ENCODE measurements at regions of chr16 and their contacts with region 1.

Region 1: GRCh38 chr16:19502395-19503131 is 19.3 kb downstream of the GDE1 start:
- DNase-seq: no peak
- ATAC-seq: peak; percentile 84
- H3K4me3 ChIP-seq: no peak overlapping the region
- H3K27ac ChIP-seq: no peak overlapping the region
- H3K4me1 ChIP-seq: no peaks in the 10 kb centered on the region
- H3K27me3 ChIP-seq: no peaks in the 10 kb centered on the region
- CTCF ChIP-seq: peak; percentile 65 to 68 (median 67)
- EP300 ChIP-seq: no peak
- POLR2A ChIP-seq: no peak
- RAD21 ChIP-seq: peak; percentile 73

Region 2: DNA sequence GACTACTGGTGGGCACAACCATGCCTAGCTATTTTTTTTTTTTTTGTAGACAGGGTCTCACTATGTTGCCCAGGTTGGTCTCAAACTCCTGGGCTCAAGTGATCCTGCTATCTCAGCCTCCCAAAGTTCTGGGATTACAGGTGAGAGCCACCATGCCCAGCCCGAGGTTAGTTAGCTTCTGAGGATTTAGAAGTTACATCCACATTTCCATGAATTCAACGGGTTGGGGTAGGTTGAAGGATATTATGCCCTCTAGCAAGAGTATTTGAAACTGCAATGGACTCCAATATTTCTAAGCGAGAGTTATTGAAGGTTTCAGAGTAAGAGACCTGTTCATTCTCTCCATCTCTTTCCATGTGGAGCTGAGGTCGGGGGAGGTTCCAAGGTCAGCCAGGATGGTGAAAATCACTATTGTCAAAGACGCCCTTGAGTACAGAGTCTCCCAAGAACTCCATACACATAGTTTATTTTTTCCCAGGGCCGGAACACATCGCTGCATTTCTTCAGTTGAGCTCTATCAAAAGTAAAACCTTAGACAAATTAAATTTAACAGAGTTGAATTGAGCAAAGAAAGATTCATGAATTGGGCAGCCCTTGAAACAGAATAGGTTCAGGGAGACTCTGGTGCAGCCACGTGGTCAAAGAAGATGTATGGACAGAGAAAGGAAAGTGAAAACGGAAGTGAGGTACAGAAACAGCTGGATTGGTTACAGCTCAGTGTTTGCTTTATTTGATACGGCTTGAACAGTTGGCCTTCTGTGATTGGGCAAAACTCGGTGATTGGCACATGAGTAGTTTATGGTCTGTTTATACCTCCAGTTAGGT is 407.8 kb before region 1 on chr16:
- CTCF ChIA-PET with region 1: no interaction called
- POLR2A ChIA-PET with region 1: no interaction called
- RAD21 ChIA-PET with region 1: no interaction called
- SMC1A ChIA-PET with region 1: interaction called, 3 read pairs
- in situ Hi-C with region 1: loop called (anchors 5 kb)
- intact Hi-C with region 1: no loop called
- DNase-seq: no peak
- ATAC-seq: peak; percentile 88
- H3K4me3 ChIP-seq: no peak overlapping the region
- H3K27ac ChIP-seq: no peak overlapping the region
- H3K4me1 ChIP-seq: peaks cover 6% of the 10 kb centered on the region; the same call in 1 of the 2 replicates
- H3K27me3 ChIP-seq: no peaks in the 10 kb centered on the region
- CTCF ChIP-seq: no peak
- EP300 ChIP-seq: no peak
- POLR2A ChIP-seq: no peak
- RAD21 ChIP-seq: no peak

Region 3: DNA sequence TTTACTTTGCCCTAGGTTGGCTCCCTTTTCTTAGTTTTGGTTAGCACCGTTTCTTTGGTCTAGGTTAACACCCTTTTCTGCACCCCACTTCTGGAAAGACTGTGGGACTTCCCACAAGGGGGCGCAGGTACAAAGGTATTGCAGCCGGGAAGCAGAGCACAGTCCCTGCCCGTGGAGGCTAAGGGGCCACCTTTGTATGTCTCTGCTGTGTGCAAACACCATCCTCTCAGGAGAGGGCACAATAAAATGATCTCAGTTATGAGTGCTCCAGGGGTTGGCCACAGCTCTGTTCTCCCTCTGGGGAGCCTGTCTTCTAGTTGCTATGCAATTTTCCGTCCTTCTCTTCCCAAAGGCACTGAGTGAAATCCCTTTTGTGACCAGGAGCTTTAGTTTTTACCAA is 113.3 kb before region 1 on chr16:
- CTCF ChIA-PET with region 1: interaction called, 63 read pairs
- POLR2A ChIA-PET with region 1: no interaction called
- RAD21 ChIA-PET with region 1: interaction called, 7 read pairs
- SMC1A ChIA-PET with region 1: interaction called, 22 read pairs
- in situ Hi-C with region 1: no loop called
- intact Hi-C with region 1: loop called (anchors 1 kb)
- DNase-seq: peak; percentile 8
- ATAC-seq: peak; percentile 81
- H3K4me3 ChIP-seq: no peak overlapping the region
- H3K27ac ChIP-seq: no peak overlapping the region
- H3K4me1 ChIP-seq: no peaks in the 10 kb centered on the region
- H3K27me3 ChIP-seq: no peaks in the 10 kb centered on the region; a peak in 1 of 4 replicates
- CTCF ChIP-seq: peak; percentile 47 to 60 (median 50); a peak in 5 of 6 replicates
- EP300 ChIP-seq: no peak
- POLR2A ChIP-seq: no peak
- RAD21 ChIP-seq: peak; percentile 69

Region 4: GRCh38 chr16:19432429-19432828 is 70.1 kb before region 1 on chr16:
- CTCF ChIA-PET with region 1: no interaction called
- POLR2A ChIA-PET with region 1: no interaction called
- RAD21 ChIA-PET with region 1: no interaction called
- SMC1A ChIA-PET with region 1: no interaction called
- in situ Hi-C with region 1: no loop called
- intact Hi-C with region 1: no loop called
- DNase-seq: no peak
- ATAC-seq: no peak
- H3K4me3 ChIP-seq: no peak overlapping the region
- H3K27ac ChIP-seq: no peak overlapping the region
- H3K4me1 ChIP-seq: peaks cover 6% of the 10 kb centered on the region; the same call in 1 of the 2 replicates
- H3K27me3 ChIP-seq: no peaks in the 10 kb centered on the region
- CTCF ChIP-seq: no peak
- EP300 ChIP-seq: no peak
- POLR2A ChIP-seq: no peak
- RAD21 ChIP-seq: no peak

Region 5: GRCh38 chr16:19488213-19488640 is 14.3 kb before region 1 on chr16:
- CTCF ChIA-PET with region 1: interaction called, 13 read pairs
- POLR2A ChIA-PET with region 1: interaction called, 3 read pairs
- RAD21 ChIA-PET with region 1: no interaction called
- SMC1A ChIA-PET with region 1: interaction called, 6 read pairs
- in situ Hi-C with region 1: no loop called
- intact Hi-C with region 1: no loop called
- DNase-seq: no peak
- ATAC-seq: no peak
- H3K4me3 ChIP-seq: no peak overlapping the region
- H3K27ac ChIP-seq: no peak overlapping the region
- H3K4me1 ChIP-seq: peaks cover under 1% of the 10 kb centered on the region; the same call in 1 of the 2 replicates
- H3K27me3 ChIP-seq: no peaks in the 10 kb centered on the region
- CTCF ChIP-seq: no peak
- EP300 ChIP-seq: no peak
- POLR2A ChIP-seq: no peak
- RAD21 ChIP-seq: no peak

Region 6: DNA sequence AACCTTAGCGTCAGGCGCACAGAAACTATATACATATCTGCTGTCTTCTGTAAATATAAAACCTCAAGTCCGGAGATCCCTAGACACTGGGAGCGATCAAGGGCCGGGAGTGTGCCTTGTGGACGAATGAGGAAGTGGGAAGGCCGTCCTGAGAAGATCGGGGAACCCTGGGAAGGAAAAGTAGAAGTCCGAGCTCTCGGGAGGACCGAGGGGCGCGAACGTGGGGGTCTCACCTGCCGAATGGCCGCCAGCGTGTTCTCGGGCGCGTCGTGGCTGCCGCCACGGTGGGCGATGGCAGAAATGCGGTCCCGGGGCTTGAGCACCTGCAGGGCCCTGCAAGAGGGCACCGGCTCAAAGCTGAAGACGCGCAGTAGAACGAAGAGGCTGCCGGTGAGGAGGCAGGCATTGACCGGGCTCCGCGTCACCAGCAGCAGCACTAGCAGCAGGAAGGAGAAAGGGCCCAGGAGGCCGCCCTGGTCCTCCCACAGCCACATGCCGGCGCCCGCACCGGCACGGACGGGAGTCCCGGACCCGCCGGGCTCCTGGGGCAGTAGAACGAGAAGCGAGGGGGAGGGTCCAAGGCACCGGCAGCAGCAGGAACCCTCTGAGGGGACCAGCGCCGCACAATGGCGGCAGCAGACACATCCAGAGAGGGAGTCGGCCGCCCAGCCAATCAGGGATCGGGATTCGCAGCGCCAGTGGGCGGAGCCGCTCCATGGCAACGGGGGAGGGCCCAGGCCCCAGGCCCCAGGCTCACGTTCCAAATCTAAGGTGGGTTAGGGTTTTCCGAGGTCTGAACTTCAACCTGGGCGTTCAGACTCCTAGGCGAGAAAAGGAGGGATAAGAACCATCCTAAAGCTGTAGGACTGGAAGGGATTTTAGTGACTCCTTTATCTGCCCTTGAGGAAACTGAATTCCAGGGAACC is 19.2 kb after region 1 on chr16 and contains the start of gene GDE1:
- CTCF ChIA-PET with region 1: interaction called, 23 read pairs
- POLR2A ChIA-PET with region 1: no interaction called
- RAD21 ChIA-PET with region 1: interaction called, 7 read pairs
- SMC1A ChIA-PET with region 1: interaction called, 5 read pairs
- in situ Hi-C with region 1: no loop called
- intact Hi-C with region 1: no loop called
- DNase-seq: peak; percentile 64
- ATAC-seq: peak; percentile 77
- H3K4me3 ChIP-seq: peak within 1 kb of the TSS; percentile 81
- H3K27ac ChIP-seq: peak within 1 kb of the TSS; percentile 74
- H3K4me1 ChIP-seq: peaks cover 14% of the 10 kb centered on the region
- H3K27me3 ChIP-seq: no peaks in the 10 kb centered on the region
- CTCF ChIP-seq: peak; percentile 39 to 61 (median 50); a peak in 5 of 6 replicates
- EP300 ChIP-seq: no peak
- POLR2A ChIP-seq: peak; percentile 89
- RAD21 ChIP-seq: no peak
- polyA plus RNA-seq, gene GDE1: 14.8 to 17.3 TPM